Panc1 (cell line): ENCODE measurements at regions of chr9 and their contacts with region 1.

Region 1: GRCh38 chr9:124040935-124041816 is 29.6 kb downstream of the LHX2 start:
- DNase-seq: peak; percentile 17
- ATAC-seq: peak; percentile 65
- H3K4me3 ChIP-seq: peak overlapping the region; percentile 41 to 56
- H3K27ac ChIP-seq: peak overlapping the region; percentile 51
- H3K4me1 ChIP-seq: peaks cover 5% of the 10 kb centered on the region; the same call in 1 of the 2 replicates
- H3K27me3 ChIP-seq: no peaks in the 10 kb centered on the region
- CTCF ChIP-seq: peak; percentile 96

Region 2: DNA sequence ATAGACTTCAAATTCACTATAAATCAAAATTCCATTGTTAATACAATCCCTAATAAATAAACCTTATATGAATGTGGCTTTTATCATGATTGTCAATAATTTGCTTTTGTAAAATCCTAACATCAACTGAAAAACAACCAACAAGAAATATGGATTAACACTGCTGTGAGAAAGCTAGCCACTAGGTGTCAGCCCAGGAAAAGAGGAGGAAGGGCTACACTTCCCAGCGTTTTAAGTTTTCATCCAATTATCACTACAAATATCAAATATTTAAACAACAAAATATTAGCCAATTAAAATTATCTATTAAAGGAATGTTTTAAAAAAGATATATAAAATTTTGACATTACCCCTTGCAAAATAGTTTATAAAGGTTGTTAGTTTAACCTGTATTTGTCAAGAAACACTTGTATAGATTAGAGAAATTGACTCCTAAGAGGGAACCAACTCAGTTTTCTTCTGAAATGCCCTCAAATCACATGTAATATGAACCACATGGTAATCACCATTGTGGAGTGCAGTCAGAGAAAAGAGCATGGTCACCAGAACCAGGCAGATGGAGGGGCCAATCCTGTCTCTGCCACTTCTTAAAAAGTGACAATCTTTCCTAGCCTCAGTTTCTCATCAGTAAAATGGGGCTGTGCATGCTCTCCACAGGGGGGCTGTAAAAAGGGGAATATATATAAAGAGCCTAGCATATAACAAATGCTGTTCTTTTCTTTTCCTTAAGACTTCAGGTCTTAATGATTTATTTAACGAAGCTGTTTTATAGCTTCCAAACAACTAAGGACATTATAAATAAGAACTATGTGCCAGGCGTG is 497.0 kb before region 1 on chr9:
- CTCF ChIA-PET with region 1: interaction called, 4 read pairs
- POLR2A ChIA-PET with region 1: interaction called, 3 read pairs
- in situ Hi-C with region 1: no loop called
- intact Hi-C with region 1: loop called (anchors 10 kb)
- DNase-seq: peak; percentile 10
- ATAC-seq: no peak
- H3K4me3 ChIP-seq: no peak overlapping the region
- H3K27ac ChIP-seq: no peak overlapping the region
- H3K4me1 ChIP-seq: no peaks in the 10 kb centered on the region
- H3K27me3 ChIP-seq: no peaks in the 10 kb centered on the region
- CTCF ChIP-seq: peak; percentile 78; the same call in 1 of the 2 replicates

Region 3: DNA sequence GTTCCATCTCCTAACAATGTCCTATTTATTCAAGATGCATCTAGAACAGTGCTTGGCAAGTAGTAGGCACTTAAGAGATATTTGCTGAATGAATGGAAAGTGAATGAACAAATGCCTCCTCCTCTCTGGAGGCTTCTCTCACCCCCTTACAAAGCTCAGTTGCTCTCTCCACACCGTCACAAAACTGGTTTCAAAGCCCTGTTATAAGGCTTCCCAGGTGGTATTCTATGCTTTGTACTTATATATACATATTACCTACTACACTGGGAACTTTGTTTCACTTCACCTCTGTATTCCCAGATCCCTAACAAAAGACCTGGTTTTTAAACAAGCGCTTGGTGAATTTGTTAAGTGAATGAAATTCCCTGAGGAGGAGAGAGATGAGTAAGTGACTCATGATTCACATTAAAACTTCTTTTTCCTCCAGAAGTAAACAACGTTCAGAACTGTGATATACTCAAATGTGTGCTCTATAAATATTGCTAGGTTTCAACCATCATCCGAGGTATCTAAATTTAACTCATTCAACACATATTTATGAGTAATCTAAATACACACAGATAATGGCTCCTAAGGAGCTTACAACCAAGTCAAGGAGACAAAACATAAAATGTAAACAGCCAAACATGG is 147.2 kb before region 1 on chr9:
- CTCF ChIA-PET with region 1: no interaction called
- POLR2A ChIA-PET with region 1: no interaction called
- in situ Hi-C with region 1: no loop called
- intact Hi-C with region 1: no loop called
- DNase-seq: peak; percentile 2
- ATAC-seq: no peak
- H3K4me3 ChIP-seq: no peak overlapping the region
- H3K27ac ChIP-seq: no peak overlapping the region
- H3K4me1 ChIP-seq: peaks cover 4% of the 10 kb centered on the region; the same call in 1 of the 2 replicates
- H3K27me3 ChIP-seq: no peaks in the 10 kb centered on the region
- CTCF ChIP-seq: no peak

Region 4: GRCh38 chr9:123942542-123942941 is 98.6 kb before region 1 on chr9:
- CTCF ChIA-PET with region 1: interaction called, 12 read pairs
- POLR2A ChIA-PET with region 1: no interaction called
- in situ Hi-C with region 1: no loop called
- intact Hi-C with region 1: no loop called
- DNase-seq: no peak
- ATAC-seq: no peak
- H3K4me3 ChIP-seq: no peak overlapping the region
- H3K27ac ChIP-seq: no peak overlapping the region
- H3K4me1 ChIP-seq: no peaks in the 10 kb centered on the region
- H3K27me3 ChIP-seq: no peaks in the 10 kb centered on the region
- CTCF ChIP-seq: no peak

Region 5: GRCh38 chr9:123964761-123965160 is 76.4 kb before region 1 on chr9:
- CTCF ChIA-PET with region 1: no interaction called
- POLR2A ChIA-PET with region 1: no interaction called
- in situ Hi-C with region 1: no loop called
- intact Hi-C with region 1: no loop called
- DNase-seq: no peak
- ATAC-seq: no peak
- H3K4me3 ChIP-seq: no peak overlapping the region
- H3K27ac ChIP-seq: no peak overlapping the region
- H3K4me1 ChIP-seq: no peaks in the 10 kb centered on the region
- H3K27me3 ChIP-seq: no peaks in the 10 kb centered on the region
- CTCF ChIP-seq: no peak

Region 6: DNA sequence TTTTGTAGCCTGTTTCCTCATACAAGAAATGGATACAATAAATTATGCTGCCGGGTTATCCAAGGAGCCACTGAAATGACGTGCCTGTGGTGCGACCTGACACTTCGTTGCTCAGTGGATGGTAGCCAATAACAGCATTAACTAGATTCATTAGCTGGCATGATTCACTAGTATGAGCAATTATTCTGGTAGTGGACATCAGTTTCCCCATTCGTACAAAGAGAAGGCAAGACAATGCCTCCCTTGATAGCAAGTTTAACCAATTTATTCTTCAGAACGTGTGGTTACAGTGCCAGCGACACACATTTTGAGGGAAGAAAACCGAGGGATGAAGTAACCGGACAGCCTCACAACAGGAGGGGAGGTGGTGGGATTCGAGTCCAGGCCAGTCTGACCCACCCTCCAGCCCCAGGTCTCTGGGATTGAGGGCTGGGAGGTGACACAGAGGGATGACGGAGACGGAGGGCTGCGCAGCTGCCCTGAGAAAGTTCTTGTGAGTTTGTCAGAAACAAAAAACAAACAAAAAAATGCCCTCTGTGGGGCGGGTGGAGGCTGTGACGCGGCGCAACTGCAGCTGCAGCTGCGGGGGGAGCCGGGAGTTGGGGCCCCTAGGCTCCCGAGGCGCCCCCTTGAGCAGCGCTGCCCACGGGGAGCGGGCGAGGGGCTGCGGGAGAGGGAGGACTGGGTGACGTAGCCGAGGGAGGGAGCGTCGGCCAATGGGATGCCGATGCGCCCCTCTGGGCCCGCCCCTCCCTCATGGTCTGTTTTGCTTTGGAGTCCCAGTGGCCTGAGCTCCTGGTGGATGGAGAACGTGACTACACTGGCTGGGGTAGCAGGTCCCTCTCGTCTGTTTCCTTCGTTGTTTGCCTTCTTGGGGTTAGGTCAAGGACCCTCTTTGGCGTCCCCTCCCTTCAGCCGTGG is 18.7 kb before region 1 on chr9:
- CTCF ChIA-PET with region 1: no interaction called
- POLR2A ChIA-PET with region 1: interaction called, 16 read pairs
- in situ Hi-C with region 1: no loop called
- intact Hi-C with region 1: no loop called
- DNase-seq: no peak
- ATAC-seq: peak; percentile 74
- H3K4me3 ChIP-seq: no peak overlapping the region
- H3K27ac ChIP-seq: no peak overlapping the region
- H3K4me1 ChIP-seq: 0 out of 2 replicates have a peak, but pooled peaks cover 5% of the 10 kb centered on the region
- H3K27me3 ChIP-seq: no peaks in the 10 kb centered on the region
- CTCF ChIP-seq: no peak

Region 7: DNA sequence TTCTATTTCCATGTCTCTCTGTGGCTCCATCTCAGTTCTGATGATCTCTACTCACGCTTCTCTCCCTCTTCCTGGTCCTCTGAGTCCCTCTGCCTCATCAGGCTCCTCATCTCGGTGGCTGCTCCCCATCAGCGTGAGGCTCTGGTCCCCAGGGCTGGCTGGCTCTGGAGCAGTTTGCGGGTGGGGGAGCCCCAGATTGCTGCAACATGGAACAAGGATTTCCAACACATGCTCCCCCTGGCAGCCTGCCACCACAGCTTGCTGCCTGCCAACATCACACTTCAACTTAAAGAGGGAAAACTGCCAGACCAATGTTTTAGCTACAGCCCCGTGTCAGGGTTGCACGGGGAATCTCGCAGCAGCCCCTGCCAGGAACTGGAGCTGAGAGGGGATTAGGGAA is 139.4 kb after region 1 on chr9:
- CTCF ChIA-PET with region 1: no interaction called
- POLR2A ChIA-PET with region 1: no interaction called
- in situ Hi-C with region 1: no loop called
- intact Hi-C with region 1: no loop called
- DNase-seq: no peak
- ATAC-seq: no peak
- H3K4me3 ChIP-seq: no peak overlapping the region
- H3K27ac ChIP-seq: no peak overlapping the region
- H3K4me1 ChIP-seq: no peaks in the 10 kb centered on the region
- H3K27me3 ChIP-seq: no peaks in the 10 kb centered on the region
- CTCF ChIP-seq: no peak

Region 8: DNA sequence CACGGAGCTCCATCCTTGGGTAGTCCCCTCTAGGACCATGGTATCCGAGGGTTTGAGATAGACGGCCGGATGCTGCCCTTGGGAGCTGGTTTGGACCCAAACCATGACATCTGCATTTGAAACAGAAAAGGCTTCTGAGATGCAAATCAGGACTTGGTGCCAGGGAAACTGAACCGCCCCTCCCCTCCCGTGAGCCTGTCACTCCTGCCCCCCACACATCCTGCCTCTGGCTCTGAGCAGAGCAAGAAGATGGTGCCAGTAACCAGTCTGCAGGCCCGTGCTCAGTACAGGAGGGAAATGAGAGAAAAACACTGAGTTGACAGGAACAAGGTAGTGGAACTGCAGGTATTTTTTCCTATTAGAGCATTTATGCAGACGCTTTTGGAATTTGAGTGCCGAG is 839.3 kb after region 1 on chr9:
- CTCF ChIA-PET with region 1: no interaction called
- POLR2A ChIA-PET with region 1: interaction called, 12 read pairs
- in situ Hi-C with region 1: no loop called
- intact Hi-C with region 1: no loop called
- DNase-seq: no peak
- ATAC-seq: no peak
- H3K4me3 ChIP-seq: no peak overlapping the region
- H3K27ac ChIP-seq: no peak overlapping the region
- H3K4me1 ChIP-seq: no peaks in the 10 kb centered on the region
- H3K27me3 ChIP-seq: no peaks in the 10 kb centered on the region
- CTCF ChIP-seq: no peak